Activated B cell treated with CpG ODN at 0.5 μM for 24 hours (primary cell): ENCODE measurements at regions of chr19 and their contacts with region 1.

Region 1: GRCh38 chr19:6521718-6522646 is 8.8 kb upstream of the TNFSF9 start:
- DNase-seq: peak; percentile 70
- ATAC-seq: peak; percentile 73
- H3K4me3 Mint-ChIP-seq: peak overlapping the region; percentile 75
- H3K27ac Mint-ChIP-seq: peak overlapping the region; percentile 99
- H3K4me1 Mint-ChIP-seq: peaks cover 55% of the 10 kb centered on the region
- H3K27me3 Mint-ChIP-seq: no peaks in the 10 kb centered on the region
- CTCF ChIP-seq: no peak

Region 2: DNA sequence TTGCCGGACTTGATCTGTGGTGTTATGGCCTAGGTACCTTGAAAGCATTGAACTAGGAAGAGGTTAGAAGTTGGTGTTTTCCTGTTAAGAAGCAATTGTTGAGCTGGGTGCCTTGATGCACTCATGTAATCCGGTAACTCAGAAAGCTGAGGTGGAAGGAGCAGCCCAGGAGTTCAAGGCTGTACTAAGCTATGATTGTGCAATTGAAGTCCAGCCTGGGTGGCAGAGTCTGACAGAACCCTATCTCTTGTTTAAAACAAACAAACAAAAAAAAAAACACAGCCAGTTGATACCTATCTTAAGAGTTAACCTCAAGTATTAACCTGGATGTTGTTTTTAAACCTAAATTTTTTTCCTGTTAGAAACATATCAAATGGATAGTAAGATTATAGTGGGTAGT is 879.8 kb before region 1 on chr19:
- CTCF ChIA-PET with region 1: no interaction called
- POLR2A ChIA-PET with region 1: no interaction called
- intact Hi-C with region 1: no loop called
- DNase-seq: no peak
- ATAC-seq: no peak
- H3K4me3 Mint-ChIP-seq: no peak overlapping the region
- H3K27ac Mint-ChIP-seq: no peak overlapping the region
- H3K4me1 Mint-ChIP-seq: peaks cover 6% of the 10 kb centered on the region
- H3K27me3 Mint-ChIP-seq: no peaks in the 10 kb centered on the region
- CTCF ChIP-seq: no peak

Region 3: GRCh38 chr19:6535558-6536137 is 13.7 kb after region 1 on chr19:
- CTCF ChIA-PET with region 1: interaction called, 3 read pairs
- POLR2A ChIA-PET with region 1: interaction called, 36 read pairs
- intact Hi-C with region 1: loop called (anchors 1 kb)
- DNase-seq: no peak
- ATAC-seq: no peak
- H3K4me3 Mint-ChIP-seq: peak overlapping the region; percentile 59
- H3K27ac Mint-ChIP-seq: peak overlapping the region; percentile 83
- H3K4me1 Mint-ChIP-seq: peaks cover 57% of the 10 kb centered on the region
- H3K27me3 Mint-ChIP-seq: peaks cover 5% of the 10 kb centered on the region
- CTCF ChIP-seq: no peak